Activated naive CD4-positive, alpha-beta T cell treated with anti-CD3 and anti-CD28 coated beads for 36 hours (primary cell): ENCODE measurements at regions of chr13 and their contacts with region 1.

Region 1: DNA sequence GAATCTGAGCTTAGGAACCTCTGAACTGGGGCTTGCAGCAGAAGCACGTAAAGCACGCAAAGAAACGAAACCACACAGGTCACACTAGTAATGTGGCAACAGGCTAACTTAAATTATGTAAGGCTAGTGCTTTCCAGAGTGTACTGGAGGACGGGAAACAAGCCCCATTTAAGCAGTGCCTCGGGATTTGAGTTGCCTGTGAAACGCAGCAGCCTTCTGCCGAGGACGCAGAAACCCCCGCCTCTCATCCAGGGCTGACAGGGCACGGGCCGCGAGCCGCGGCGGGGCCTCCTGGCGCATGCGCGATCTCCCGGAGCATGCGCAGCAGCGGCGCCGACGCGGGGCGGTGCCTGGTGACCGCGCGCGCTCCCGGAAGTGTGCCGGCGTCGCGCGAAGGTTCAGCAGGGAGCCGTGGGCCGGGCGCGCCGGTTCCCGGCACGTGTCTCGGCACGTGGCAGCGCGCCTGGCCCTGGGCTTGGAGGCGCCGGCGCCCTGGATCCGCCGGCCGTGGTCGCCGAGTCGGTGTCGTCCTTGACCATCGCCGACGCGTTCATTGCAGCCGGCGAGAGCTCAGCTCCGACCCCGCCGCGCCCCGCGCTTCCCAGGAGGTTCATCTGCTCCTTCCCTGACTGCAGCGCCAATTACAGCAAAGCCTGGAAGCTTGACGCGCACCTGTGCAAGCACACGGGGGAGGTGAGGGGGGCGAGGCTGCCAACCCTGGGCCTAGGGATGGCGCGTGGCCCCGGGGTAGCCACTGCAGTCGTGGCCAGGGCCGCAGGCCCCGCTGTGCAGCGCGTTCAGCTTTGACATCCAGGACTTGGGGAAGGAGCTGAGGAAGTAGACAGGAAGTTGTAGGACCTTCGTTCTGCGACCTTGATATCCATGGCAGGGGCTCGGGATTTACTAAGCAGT is at the start of gene GTF3A:
- DNase-seq: peak; percentile 89
- H3K4me3 Mint-ChIP-seq: peak within 1 kb of the TSS; percentile 88
- H3K27ac Mint-ChIP-seq: peak within 1 kb of the TSS; percentile 91
- H3K4me1 Mint-ChIP-seq: peaks cover 30% of the 10 kb centered on the region
- H3K27me3 Mint-ChIP-seq: no peaks in the 10 kb centered on the region
- total RNA-seq, gene GTF3A: 303 to 314 TPM

Region 2: DNA sequence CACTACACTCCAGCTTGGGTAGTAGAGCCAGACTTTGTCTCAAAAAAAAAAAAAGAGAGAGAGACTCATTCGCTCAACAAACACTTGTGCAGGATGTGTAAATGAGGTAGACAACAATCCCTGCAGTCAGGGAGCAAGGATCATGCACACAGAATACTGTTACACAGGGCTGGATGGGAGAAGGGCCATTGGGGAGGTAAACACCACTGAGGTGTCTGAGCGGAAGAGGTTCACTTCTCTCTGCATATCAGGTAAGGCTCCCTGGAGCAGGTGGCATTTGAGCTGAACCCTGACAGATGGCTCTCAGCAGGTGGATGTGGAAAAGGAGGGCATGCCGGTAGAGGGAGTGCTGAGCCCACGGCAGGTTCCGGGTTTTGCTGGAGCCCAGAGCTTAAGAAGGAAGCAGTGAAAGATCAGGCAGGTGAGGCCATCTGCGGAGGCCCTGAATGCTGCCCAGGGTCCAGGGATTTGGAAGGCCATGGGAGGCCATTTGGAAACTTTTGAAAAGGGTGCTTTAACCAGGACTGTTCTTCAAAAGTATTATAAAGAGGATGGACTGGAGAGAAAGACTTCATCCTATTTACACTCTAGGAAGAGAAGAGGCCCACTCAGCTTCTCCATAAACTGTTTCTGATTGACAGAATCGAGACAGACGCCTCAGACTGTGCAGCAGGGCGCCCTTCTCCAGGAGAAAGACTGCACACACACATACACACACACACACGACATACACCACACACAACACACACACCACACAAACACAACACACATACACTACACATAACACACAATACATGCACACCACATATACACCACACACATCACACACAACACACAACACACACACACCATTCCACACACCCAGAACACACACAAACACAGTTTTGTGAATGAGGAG is 452.3 kb before region 1 on chr13:
- CTCF ChIA-PET with region 1: no interaction called
- intact Hi-C with region 1: no loop called
- DNase-seq: peak; percentile 65
- H3K4me3 Mint-ChIP-seq: no peak overlapping the region
- H3K27ac Mint-ChIP-seq: peak overlapping the region; percentile 1
- H3K4me1 Mint-ChIP-seq: no peaks in the 10 kb centered on the region
- H3K27me3 Mint-ChIP-seq: no peaks in the 10 kb centered on the region

Region 3: DNA sequence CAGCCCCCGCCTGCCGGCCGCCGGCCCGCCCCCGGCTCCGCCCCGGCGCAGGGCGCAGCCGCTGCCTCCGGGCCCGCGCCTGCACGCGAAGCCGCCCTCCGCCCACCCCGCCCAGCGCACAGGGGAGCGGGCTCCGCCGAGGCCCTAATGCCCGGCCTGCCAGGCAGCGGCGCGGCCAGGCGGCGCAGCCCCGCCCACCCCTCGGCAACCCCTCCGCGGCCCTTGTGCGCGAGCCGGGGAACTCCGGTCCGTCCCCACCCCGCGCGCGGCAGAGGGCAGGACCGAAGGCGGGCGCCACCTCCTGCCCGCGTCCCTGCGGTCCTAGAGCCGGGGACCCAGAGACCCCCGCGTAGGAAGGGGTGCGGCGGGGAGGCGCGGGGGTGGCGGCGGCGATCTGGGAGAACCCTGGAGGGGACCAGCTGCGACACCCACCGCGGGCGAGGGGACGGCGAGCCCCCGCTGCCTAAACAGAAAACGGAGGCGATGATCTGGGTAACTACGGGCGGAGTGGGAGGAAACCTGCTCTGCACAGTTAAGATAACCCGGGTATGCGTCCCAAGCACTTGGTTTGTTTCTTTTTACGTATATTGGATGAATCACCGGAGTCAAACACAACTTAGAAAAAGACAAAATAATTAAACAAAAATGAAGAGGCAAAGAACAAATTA is 252.5 kb before region 1 on chr13:
- CTCF ChIA-PET with region 1: no interaction called
- intact Hi-C with region 1: loop called (anchors 5 kb)
- DNase-seq: peak; percentile 79
- H3K4me3 Mint-ChIP-seq: peak overlapping the region; percentile 81
- H3K27ac Mint-ChIP-seq: peak overlapping the region; percentile 81
- H3K4me1 Mint-ChIP-seq: peaks cover 61% of the 10 kb centered on the region
- H3K27me3 Mint-ChIP-seq: no peaks in the 10 kb centered on the region

Region 4: DNA sequence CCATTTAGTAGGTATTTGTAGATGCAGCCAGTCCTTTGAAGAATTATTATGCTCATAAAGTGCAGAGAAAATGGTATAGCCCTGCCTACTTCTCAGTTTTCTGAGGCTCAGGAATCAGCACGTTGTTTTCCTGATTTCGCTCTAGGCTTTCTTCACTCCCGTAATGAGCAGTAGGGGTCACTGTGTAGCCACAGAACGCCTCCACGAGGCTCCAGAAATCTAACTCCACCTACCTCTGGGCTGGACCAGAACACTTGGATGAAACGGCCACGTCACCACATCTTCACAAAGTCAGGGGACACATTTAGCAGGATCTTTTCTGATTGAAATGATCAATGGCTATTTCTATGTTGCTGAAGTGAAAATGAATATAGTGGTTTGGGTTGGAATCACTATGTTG is 49.9 kb before region 1 on chr13:
- CTCF ChIA-PET with region 1: interaction called, 3 read pairs
- intact Hi-C with region 1: loop called (anchors 1 kb)
- DNase-seq: peak; percentile 72
- H3K4me3 Mint-ChIP-seq: no peak overlapping the region
- H3K27ac Mint-ChIP-seq: no peak overlapping the region
- H3K4me1 Mint-ChIP-seq: peaks cover 2% of the 10 kb centered on the region
- H3K27me3 Mint-ChIP-seq: peaks cover 18% of the 10 kb centered on the region

Region 5: DNA sequence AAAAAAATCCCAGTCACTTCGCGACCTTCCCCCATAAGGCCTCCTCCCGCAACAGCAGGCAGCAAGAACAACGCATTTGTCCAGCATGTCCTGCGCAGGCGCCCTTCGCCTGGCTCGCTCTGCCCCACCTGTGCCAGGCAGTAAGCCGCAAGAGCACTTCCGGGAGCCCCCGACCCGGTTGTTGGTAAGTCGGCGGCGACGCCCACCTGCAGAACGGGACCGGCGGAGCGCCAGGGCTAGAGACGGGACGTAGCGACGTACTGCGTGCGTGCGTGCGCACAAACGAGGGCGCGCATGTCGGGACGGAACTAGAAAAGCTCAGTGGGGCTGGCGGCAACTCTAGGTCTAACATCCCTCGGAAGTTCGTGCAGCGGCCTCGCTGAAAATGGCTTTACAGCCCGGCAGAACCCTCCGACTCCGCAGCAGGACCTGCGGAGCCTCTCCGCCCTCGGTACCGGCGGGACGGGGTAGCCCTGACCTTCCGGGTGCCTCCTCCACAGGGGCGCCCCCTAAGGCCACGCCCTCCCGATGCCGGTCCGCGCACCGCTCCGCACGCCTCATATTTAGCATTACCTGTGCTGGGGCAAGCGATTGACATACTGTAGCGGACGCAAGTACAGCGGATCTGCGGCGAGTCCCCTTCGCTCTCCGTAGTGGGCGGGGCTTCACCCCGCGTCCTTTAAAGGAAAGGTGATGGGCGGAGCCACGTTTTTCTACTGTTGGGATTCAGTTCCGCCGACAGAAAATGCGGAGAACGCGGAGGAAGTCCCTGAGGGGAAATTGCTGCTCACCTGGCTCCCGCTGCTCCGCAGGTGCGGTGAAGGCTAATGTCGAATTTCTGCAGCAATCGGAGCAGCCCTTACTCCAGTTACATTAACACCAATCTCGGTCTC is 25.7 kb after region 1 on chr13 and contains the start of gene MTIF3:
- CTCF ChIA-PET with region 1: interaction called, 34 read pairs
- intact Hi-C with region 1: loop called (anchors 1 kb)
- DNase-seq: peak; percentile 97
- H3K4me3 Mint-ChIP-seq: peak within 1 kb of the TSS; percentile 94
- H3K27ac Mint-ChIP-seq: peak within 1 kb of the TSS; percentile 99
- H3K4me1 Mint-ChIP-seq: peaks cover 55% of the 10 kb centered on the region
- H3K27me3 Mint-ChIP-seq: no peaks in the 10 kb centered on the region
- total RNA-seq, gene MTIF3: 34.0 to 42.1 TPM

Region 6: DNA sequence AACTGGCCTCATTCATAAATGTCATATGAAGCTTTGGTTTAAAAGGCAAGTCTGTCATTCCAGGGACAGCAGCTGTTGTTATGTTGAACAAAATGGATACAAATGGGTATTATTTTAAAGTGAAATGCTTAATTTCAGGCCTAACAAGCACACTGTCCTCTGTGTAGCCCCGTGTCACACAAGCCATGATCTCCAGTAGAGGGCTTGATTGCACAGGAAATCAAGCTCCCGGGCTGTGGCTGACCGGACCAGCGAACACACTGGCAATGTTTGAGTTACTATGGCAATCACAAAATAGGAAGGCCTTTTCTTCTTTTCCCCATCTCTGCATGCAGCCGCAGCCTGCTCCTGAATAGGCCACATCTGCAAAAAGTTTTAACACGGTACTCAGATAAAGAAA is 303.8 kb after region 1 on chr13:
- CTCF ChIA-PET with region 1: no interaction called
- intact Hi-C with region 1: no loop called
- DNase-seq: no peak
- H3K4me3 Mint-ChIP-seq: no peak overlapping the region
- H3K27ac Mint-ChIP-seq: no peak overlapping the region
- H3K4me1 Mint-ChIP-seq: peaks cover 11% of the 10 kb centered on the region
- H3K27me3 Mint-ChIP-seq: peaks cover 2% of the 10 kb centered on the region

Region 7: DNA sequence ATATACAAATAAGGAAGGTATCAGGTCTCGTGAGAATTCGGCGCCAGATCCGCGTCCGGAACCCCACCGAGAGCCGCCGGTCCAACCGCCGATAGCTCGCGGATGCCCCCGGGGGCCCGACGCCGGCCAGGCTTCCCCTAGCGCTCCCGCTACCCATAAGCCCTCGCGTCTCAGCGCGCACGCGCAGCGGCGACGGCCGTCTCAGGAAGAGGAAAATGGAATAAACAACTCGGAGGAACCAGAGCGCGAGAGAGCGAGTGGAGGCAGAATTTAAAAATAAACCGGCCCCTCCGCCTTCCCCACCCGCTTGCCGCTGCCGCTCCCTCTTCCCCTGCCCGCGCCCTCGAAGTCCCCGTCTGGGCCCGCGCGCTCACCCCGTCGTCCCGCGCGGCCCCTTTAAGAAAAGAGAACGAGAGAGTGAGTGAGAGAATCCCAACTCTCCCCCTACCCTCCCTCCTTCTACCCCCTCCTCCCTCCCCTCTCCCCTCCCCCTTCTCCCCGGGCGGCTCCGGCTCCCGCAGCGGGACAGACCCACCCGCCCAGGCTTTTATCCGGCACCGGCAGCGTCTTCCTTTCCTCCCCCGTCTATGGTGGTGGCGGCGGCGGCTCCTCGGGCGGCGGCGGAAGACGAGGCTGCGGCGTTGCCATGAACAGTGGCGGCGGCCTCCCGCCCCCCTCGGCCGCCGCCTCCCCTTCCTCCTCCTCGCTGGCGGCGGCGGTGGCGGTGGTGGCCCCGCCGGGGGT is 713.7 kb after region 1 on chr13 and contains the start of gene PAN3:
- CTCF ChIA-PET with region 1: no interaction called
- intact Hi-C with region 1: loop called (anchors 1 kb)
- DNase-seq: peak; percentile 92
- H3K4me3 Mint-ChIP-seq: peak within 1 kb of the TSS; percentile 77
- H3K27ac Mint-ChIP-seq: peak within 1 kb of the TSS; percentile 96
- H3K4me1 Mint-ChIP-seq: peaks cover 37% of the 10 kb centered on the region
- H3K27me3 Mint-ChIP-seq: no peaks in the 10 kb centered on the region
- total RNA-seq, gene PAN3: 21.2 to 21.7 TPM